ENCODE measurements at regions of chr11 and their contacts with region 1.

Region 1: DNA sequence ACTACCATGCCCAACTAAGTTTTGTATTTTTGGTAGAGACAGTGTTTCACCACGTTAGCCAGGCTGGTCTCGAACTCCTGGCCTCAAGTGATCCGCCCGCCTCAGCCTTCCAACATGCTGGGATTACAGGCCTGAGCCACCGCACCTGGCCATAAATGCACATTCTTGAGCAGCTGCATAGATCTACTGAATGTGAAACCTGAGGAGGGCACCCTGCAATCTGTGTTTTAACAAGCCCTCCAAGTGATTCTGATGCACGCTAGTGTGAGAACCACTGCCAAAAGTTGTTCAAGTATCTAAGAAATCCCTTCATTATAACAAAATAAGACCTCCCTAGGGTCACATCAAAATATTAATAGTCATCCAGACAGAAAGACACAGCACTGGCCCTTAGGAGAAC is 89.3 kb downstream of the RDX start:
- DNase-seq: no peak
- ATAC-seq: no peak
- H3K4me3 ChIP-seq: no peak overlapping the region
- H3K27ac ChIP-seq: no peak overlapping the region
- H3K4me1 ChIP-seq: no peaks in the 10 kb centered on the region
- H3K27me3 ChIP-seq: no peaks in the 10 kb centered on the region
- CTCF ChIP-seq: no peak
- POLR2A ChIP-seq: no peak

Region 2: DNA sequence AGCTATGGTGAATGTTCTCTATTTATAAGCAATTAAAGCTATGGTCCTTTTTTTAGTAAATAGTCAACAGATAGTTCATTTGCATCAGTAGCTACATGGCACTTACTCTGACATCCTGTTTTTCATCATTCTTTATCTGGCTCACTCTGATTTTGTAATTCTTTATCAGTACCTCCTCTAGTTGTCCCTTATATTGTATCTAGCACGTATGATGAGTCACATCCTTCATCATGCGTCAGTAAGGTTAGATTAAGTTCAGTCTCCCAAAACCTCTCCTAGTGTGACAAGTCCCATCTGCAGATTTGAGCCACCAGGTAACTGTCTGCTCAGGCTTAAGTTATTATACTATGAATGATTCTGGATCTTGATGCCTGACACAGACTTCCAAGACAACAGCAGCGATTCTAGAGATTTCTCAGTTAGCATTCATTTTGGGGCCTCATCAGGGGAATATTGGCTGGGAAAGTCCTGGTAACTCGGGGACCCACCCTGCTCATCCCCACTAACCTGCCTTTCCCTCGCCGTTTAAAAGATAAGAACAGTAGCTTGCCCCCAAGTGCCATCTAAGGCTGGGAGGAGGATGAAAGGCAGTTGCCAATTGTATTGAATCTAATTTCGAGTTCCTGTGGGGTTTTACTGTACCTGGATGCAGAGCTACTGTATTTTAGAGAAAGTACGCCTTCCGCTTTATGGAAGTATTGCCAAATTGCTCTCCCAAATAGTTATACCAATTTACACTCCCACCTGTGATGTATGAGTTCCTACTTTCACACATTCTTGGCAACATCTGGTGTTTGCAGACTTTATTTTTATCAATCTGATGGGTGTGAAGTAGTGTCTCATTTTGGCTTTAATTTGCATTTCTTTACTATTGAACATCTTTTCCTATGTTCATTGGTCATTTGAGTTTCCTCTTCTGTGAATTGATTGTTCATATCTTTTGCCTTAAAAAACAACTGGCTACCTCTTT is 58.1 kb before region 1 on chr11:
- intact Hi-C with region 1: no loop called
- DNase-seq: no peak
- ATAC-seq: peak in 3 of 4 donors; percentile 73 to 88 (median 85)
- H3K4me3 ChIP-seq: no peak overlapping the region
- H3K27ac ChIP-seq: peak overlapping the region in 2 of 12 donors; percentile 21 to 44
- H3K4me1 ChIP-seq: peaks cover 0 to 25% (median 14%) of the 10 kb centered on the region in 12 donors
- H3K27me3 ChIP-seq: no peaks in the 10 kb centered on the region
- CTCF ChIP-seq: no peak
- POLR2A ChIP-seq: no peak

Region 3: DNA sequence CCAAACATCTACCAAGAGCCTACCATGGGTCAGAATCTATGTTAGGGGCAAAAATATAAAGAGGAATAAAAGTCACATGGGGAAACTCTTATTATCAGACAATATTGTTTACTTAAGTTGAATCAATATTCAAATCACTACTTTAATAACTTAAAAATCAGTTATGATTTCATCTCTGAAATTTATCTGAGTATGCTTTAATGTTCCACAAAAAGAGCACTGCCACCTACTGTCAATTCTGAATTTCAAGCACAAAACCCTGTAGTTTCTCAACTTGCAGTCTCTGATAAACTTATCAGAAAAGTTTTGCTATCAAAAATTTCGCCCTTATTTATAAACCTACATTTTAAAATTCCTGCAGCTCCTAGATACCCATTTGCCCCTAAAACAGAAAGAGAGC is 41.9 kb after region 1 on chr11:
- intact Hi-C with region 1: loop called in 1 of 10 experiments (anchors 5 kb)
- DNase-seq: no peak
- ATAC-seq: no peak
- H3K4me3 ChIP-seq: no peak overlapping the region
- H3K27ac ChIP-seq: no peak overlapping the region
- H3K4me1 ChIP-seq: peaks cover 0 to 30% (median 11%) of the 10 kb centered on the region in 12 donors
- H3K27me3 ChIP-seq: no peaks in the 10 kb centered on the region
- CTCF ChIP-seq: peak in 6 of 12 donors; percentile 17 to 40 (median 32)
- POLR2A ChIP-seq: no peak

Region 4: GRCh38 chr11:110362971-110363509 is 155.9 kb after region 1 on chr11:
- intact Hi-C with region 1: loop called in 3 of 10 experiments (anchors 5 kb)
- DNase-seq: peak in 3 of 5 donors; percentile 20 to 36 (median 30)
- ATAC-seq: peak in 3 of 4 donors; percentile 52 to 72 (median 68)
- H3K4me3 ChIP-seq: no peak overlapping the region
- H3K27ac ChIP-seq: peak overlapping the region in 11 of 12 donors; percentile 3 to 70 (median 41)
- H3K4me1 ChIP-seq: peaks cover 6 to 34% (median 14%) of the 10 kb centered on the region in 12 donors
- H3K27me3 ChIP-seq: no peaks in the 10 kb centered on the region
- CTCF ChIP-seq: no peak
- POLR2A ChIP-seq: no peak